MCF 10A (cell line): ENCODE measurements at regions of chr5 and their contacts with region 1.

Region 1: GRCh38 chr5:151020304-151021110 is at the start of gene GPX3:
- DNase-seq: no peak
- H3K4me3 Mint-ChIP-seq: no peak within 1 kb of the TSS
- H3K27ac Mint-ChIP-seq: peak within 1 kb of the TSS; percentile 28
- H3K4me1 Mint-ChIP-seq: peaks cover 39% of the 10 kb centered on the region
- H3K27me3 Mint-ChIP-seq: no peaks in the 10 kb centered on the region
- CTCF ChIP-seq: no peak
- total RNA-seq, gene GPX3: not detected in 2 replicates

Region 2: DNA sequence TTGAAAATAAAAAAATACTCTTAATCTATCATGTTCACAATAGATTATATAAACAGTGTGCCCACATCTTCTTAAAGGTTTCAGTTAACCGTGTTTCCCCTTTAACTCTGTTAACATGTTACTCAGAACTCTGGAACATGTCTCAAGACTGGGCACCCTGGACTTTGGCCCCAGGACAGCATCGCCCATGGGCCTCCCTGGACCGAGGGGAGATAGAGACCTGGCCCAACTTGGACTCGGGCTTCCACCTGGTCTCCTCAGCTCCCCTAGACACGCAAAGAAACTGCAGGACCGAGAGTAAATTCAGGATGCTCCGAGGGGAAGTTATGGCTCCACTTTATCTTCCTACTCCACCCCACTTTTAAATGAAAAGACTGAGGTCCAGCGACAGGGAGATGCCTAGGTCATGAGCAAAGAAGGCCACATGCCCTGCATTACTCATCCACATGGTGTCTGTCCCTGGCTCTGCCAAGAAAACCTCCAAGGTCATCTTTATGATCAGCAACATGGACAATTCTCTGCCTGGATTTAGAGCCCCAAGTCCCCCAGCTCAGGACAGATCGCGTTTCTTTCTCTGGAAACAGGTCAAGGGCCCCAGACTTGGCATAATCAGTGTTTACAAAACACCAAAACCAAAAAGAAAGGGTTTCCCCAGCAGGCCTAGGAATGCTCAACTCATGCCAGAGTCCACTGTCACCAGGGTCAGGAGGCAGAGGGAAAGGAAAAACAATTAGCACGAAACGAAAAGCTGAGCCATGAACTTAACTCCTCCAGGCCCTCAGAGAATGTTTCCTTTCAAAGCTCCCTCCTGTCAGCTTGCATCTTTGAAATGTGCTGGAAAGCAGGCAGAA is 17.3 kb after region 1 on chr5:
- CTCF ChIA-PET with region 1: interaction called, 15 read pairs
- POLR2A ChIA-PET with region 1: interaction called, 9 read pairs
- intact Hi-C with region 1: no loop called
- DNase-seq: no peak
- H3K4me3 Mint-ChIP-seq: no peak overlapping the region
- H3K27ac Mint-ChIP-seq: peak overlapping the region; percentile 75
- H3K4me1 Mint-ChIP-seq: peaks cover 7% of the 10 kb centered on the region
- H3K27me3 Mint-ChIP-seq: no peaks in the 10 kb centered on the region
- CTCF ChIP-seq: no peak